SK-N-SH (cell line): ENCODE measurements at regions of chr5 and their contacts with region 1.

Region 1: GRCh38 chr5:139968547-139969261 is 74.4 kb downstream of the NRG2 start:
- DNase-seq: peak; percentile 91
- H3K4me3 ChIP-seq: peak overlapping the region in 1 of 2 experiments; percentile 28; a peak in 1 of 4 replicates
- H3K27ac ChIP-seq: no peak overlapping the region
- H3K4me1 ChIP-seq: peaks cover 0 to 16% of the 10 kb centered on the region in 2 experiments; a peak in 1 of 4 replicates
- H3K27me3 ChIP-seq: no peaks in the 10 kb centered on the region
- CTCF ChIP-seq: peak; percentile 97
- EP300 ChIP-seq: no peak
- RAD21 ChIP-seq: peak; percentile 99

Region 2: GRCh38 chr5:139795074-139796001 is 173.4 kb before region 1 on chr5 and contains the start of gene PSD2:
- CTCF ChIA-PET with region 1: interaction called, 484 read pairs
- POLR2A ChIA-PET with region 1: no interaction called
- DNase-seq: peak; percentile 89
- H3K4me3 ChIP-seq: peak within 1 kb of the TSS in 1 of 2 experiments; percentile 44; a peak in 3 of 4 replicates
- H3K27ac ChIP-seq: no peak within 1 kb of the TSS
- H3K4me1 ChIP-seq: peaks cover 0 to 4% of the 10 kb centered on the region in 2 experiments; a peak in 1 of 4 replicates
- H3K27me3 ChIP-seq: peaks cover 60% of the 10 kb centered on the region
- CTCF ChIP-seq: no peak
- EP300 ChIP-seq: no peak
- RAD21 ChIP-seq: no peak
- polyA plus RNA-seq, gene PSD2: 0.15 TPM in 2 replicates

Region 3: GRCh38 chr5:139863855-139864558 is 104.7 kb before region 1 on chr5:
- CTCF ChIA-PET with region 1: interaction called, 161 read pairs
- POLR2A ChIA-PET with region 1: no interaction called
- DNase-seq: peak; percentile 85
- H3K4me3 ChIP-seq: no peak overlapping the region
- H3K27ac ChIP-seq: no peak overlapping the region
- H3K4me1 ChIP-seq: peaks cover 0 to 2% of the 10 kb centered on the region in 2 experiments; a peak in 1 of 4 replicates
- H3K27me3 ChIP-seq: no peaks in the 10 kb centered on the region
- CTCF ChIP-seq: peak; percentile 79
- EP300 ChIP-seq: no peak
- RAD21 ChIP-seq: peak; percentile 79

Region 4: DNA sequence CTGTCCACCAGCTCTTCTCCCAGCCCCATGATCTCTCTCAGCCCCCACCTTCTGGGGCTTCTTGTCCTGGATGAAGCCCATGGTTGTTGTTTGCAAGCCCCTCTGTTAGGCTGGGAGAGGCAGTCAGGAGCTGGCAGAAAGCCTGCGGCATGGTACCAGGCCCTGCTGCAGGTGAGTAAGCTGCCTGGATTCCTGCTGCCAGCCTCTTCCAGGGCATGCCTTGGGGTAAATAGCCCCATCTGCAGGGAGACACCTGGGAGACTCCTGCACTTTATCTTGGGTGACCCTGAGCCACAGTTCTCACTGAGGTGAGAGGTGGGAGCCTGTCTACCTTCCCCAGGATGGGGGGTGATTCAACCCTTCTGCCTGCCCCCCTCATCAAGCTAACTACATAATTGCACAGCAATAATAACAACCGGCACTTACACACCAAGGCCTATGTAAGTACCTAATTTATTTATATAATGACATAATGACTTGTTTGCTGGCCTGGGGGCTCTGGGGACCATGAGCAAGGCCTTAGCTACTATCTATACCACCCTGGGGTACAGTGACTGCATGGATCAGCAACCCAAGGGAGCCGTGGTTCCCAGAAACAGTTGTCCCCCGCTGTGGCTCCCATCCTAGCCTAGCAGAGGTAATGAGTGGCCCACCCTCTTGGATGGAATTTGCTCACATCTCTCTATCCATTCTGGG is 57.1 kb before region 1 on chr5:
- CTCF ChIA-PET with region 1: interaction called, 42 read pairs
- POLR2A ChIA-PET with region 1: no interaction called
- DNase-seq: no peak
- H3K4me3 ChIP-seq: no peak overlapping the region
- H3K27ac ChIP-seq: no peak overlapping the region
- H3K4me1 ChIP-seq: peaks cover 0 to 48% of the 10 kb centered on the region in 2 experiments; a peak in 2 of 4 replicates
- H3K27me3 ChIP-seq: no peaks in the 10 kb centered on the region
- CTCF ChIP-seq: no peak
- EP300 ChIP-seq: no peak
- RAD21 ChIP-seq: no peak

Region 5: GRCh38 chr5:139985733-139986132 is 17.0 kb after region 1 on chr5:
- CTCF ChIA-PET with region 1: interaction called, 71 read pairs
- POLR2A ChIA-PET with region 1: no interaction called
- DNase-seq: no peak
- H3K4me3 ChIP-seq: no peak overlapping the region; a peak in 1 of 4 replicates
- H3K27ac ChIP-seq: peak overlapping the region in 1 of 2 experiments; percentile 94; a peak in 3 of 4 replicates
- H3K4me1 ChIP-seq: peaks cover 22 to 27% of the 10 kb centered on the region in 2 experiments
- H3K27me3 ChIP-seq: no peaks in the 10 kb centered on the region
- CTCF ChIP-seq: no peak
- EP300 ChIP-seq: peak in 1 of 2 experiments; percentile 75; a peak in 1 of 4 replicates
- RAD21 ChIP-seq: no peak

Region 6: GRCh38 chr5:140145818-140146522 is 177.3 kb after region 1 on chr5:
- CTCF ChIA-PET with region 1: interaction called, 22 read pairs
- POLR2A ChIA-PET with region 1: no interaction called
- DNase-seq: peak; percentile 90
- H3K4me3 ChIP-seq: peak overlapping the region; percentile 32 to 43
- H3K27ac ChIP-seq: no peak overlapping the region
- H3K4me1 ChIP-seq: peaks cover 0 to 8% of the 10 kb centered on the region in 2 experiments; a peak in 1 of 4 replicates
- H3K27me3 ChIP-seq: no peaks in the 10 kb centered on the region
- CTCF ChIP-seq: peak; percentile 67
- EP300 ChIP-seq: peak in 1 of 2 experiments; percentile 44; a peak in 1 of 4 replicates
- RAD21 ChIP-seq: peak; percentile 32; the same call in 1 of the 2 replicates